ENCODE measurements at regions of chr12 and their contacts with region 1.

Region 1: DNA sequence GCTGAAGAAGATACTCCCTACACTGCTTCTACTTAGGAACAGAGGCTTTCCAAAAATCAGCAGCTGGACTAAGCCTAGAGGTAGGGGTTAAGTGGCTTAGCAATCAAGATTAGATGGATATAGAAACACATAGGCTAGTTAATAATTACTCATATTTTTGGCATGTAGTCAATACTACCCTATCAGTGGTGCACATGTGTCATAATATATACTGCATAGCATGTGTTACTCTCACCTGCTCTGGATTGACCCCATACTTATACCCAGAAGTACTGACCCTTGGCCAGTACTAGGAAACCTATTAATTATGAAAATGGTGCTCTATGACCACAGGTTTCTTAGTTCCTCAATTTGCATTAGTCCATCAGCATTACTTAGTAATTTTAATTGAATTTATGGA is 528.4 kb upstream of the LMO3 start:
- H3K4me3 Mint-ChIP-seq: no peak overlapping the region
- H3K27ac Mint-ChIP-seq: no peak overlapping the region
- H3K4me1 Mint-ChIP-seq: no peaks in the 10 kb centered on the region
- H3K27me3 Mint-ChIP-seq: no peaks in the 10 kb centered on the region

Region 2: GRCh38 chr12:16833376-16834015 is 300.8 kb before region 1 on chr12:
- intact Hi-C with region 1: no loop called
- H3K4me3 Mint-ChIP-seq: no peak overlapping the region
- H3K27ac Mint-ChIP-seq: no peak overlapping the region
- H3K4me1 Mint-ChIP-seq: no peaks in the 10 kb centered on the region
- H3K27me3 Mint-ChIP-seq: no peaks in the 10 kb centered on the region

Region 3: DNA sequence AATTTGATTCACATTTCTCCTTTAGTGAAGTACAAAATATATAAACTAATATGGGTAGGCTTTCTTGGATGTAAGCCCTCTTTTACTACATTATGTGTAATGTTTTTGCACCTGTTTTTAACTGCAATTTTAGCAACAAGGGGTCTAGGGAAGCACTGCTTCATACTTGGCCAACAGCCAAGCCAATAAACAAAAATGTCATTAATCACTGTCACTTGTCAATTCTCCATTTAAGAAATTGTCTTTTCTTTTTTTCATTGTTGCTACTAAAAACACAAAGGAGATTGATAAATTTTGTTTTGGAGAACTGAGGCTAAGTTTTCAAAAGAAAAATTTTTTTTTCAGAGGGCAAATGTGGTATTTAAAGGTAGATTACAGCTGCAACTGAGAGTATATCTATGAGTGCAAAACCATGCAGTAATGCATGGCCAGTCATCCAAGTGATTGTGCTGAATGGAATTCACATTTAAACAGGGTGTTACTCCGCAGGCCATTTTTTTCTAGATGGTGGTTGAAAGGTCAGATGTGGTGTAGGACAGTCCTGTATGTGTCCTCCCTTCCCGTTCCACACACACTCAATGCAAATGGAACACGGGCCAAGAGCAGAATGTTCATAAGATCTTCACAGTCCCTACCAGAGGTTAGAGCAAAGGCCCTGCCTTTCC is 25.3 kb before region 1 on chr12:
- intact Hi-C with region 1: loop called (anchors 2 kb)
- H3K4me3 Mint-ChIP-seq: no peak overlapping the region
- H3K27ac Mint-ChIP-seq: no peak overlapping the region
- H3K4me1 Mint-ChIP-seq: no peaks in the 10 kb centered on the region
- H3K27me3 Mint-ChIP-seq: no peaks in the 10 kb centered on the region

Region 4: GRCh38 chr12:17809206-17809605 is 674.9 kb after region 1 on chr12:
- intact Hi-C with region 1: no loop called
- H3K4me3 Mint-ChIP-seq: no peak overlapping the region
- H3K27ac Mint-ChIP-seq: no peak overlapping the region
- H3K4me1 Mint-ChIP-seq: no peaks in the 10 kb centered on the region
- H3K27me3 Mint-ChIP-seq: no peaks in the 10 kb centered on the region